ENCODE measurements at regions of chr19 and their contacts with region 1.

Region 1: DNA sequence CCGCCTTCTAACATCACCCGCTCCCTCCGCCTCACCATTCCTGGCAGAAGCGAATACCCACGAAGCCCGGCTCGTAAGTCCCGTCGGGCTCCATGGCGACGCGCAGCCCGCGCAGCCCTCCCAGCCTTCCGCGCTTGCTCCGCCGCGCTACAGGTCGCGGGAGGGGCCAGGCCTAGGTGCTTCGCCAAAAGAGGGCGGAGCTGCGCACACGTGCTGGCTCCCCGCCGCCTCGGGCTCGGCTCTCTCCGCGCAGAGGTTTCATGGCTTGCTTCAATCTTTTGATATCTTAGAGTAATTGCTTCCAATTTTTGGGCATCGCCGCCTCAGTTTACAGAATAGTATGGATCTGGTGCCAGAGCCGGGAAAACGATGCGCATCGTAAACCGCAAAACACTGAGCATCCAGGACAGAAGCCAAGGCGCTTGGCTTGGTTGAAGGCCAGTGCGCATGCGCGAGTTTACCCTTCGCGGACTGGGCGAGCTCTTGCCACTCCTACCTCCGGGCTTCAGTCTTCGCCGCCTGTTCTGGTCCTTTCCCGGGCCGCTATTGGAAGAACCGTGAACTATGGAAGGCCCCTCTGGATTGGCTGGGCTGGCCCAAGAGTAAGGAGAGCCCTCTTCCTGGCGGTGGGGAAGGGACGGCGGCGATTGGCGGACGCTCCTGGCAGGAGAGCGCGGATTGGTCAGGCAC is at the start of gene POLR2I:
- DNase-seq: peak; percentile 97
- ATAC-seq: peak; percentile 90
- H3K4me3 ChIP-seq: peak within 1 kb of the TSS; percentile 73
- H3K27ac ChIP-seq: peak within 1 kb of the TSS; percentile 66
- H3K4me1 ChIP-seq: peaks cover 18% of the 10 kb centered on the region; the same call in 1 of the 2 replicates
- H3K27me3 ChIP-seq: no peaks in the 10 kb centered on the region
- CTCF ChIP-seq: no peak
- total RNA-seq, gene POLR2I: 191 and 250 TPM in 2 replicates

Region 2: GRCh38 chr19:36060430-36060829 is 54.5 kb before region 1 on chr19:
- CTCF ChIA-PET with region 1: interaction called, 5 read pairs
- POLR2A ChIA-PET with region 1: no interaction called
- intact Hi-C with region 1: loop called (anchors 2 kb)
- DNase-seq: peak; percentile 42
- ATAC-seq: peak; percentile 65
- H3K4me3 ChIP-seq: no peak overlapping the region
- H3K27ac ChIP-seq: no peak overlapping the region
- H3K4me1 ChIP-seq: peaks cover 6% of the 10 kb centered on the region
- H3K27me3 ChIP-seq: no peaks in the 10 kb centered on the region
- CTCF ChIP-seq: peak; percentile 60

Region 3: GRCh38 chr19:36152352-36153091 is 37.6 kb after region 1 on chr19 and contains the start of gene COX7A1:
- CTCF ChIA-PET with region 1: no interaction called
- POLR2A ChIA-PET with region 1: interaction called, 34 read pairs
- intact Hi-C with region 1: no loop called
- DNase-seq: no peak
- ATAC-seq: no peak
- H3K4me3 ChIP-seq: no peak within 1 kb of the TSS
- H3K27ac ChIP-seq: no peak within 1 kb of the TSS
- H3K4me1 ChIP-seq: no peaks in the 10 kb centered on the region
- H3K27me3 ChIP-seq: no peaks in the 10 kb centered on the region
- CTCF ChIP-seq: no peak
- total RNA-seq, gene COX7A1: not detected in 2 replicates